H1 (cell line): ENCODE measurements at regions of chr19 and their contacts with region 1.

Region 1: DNA sequence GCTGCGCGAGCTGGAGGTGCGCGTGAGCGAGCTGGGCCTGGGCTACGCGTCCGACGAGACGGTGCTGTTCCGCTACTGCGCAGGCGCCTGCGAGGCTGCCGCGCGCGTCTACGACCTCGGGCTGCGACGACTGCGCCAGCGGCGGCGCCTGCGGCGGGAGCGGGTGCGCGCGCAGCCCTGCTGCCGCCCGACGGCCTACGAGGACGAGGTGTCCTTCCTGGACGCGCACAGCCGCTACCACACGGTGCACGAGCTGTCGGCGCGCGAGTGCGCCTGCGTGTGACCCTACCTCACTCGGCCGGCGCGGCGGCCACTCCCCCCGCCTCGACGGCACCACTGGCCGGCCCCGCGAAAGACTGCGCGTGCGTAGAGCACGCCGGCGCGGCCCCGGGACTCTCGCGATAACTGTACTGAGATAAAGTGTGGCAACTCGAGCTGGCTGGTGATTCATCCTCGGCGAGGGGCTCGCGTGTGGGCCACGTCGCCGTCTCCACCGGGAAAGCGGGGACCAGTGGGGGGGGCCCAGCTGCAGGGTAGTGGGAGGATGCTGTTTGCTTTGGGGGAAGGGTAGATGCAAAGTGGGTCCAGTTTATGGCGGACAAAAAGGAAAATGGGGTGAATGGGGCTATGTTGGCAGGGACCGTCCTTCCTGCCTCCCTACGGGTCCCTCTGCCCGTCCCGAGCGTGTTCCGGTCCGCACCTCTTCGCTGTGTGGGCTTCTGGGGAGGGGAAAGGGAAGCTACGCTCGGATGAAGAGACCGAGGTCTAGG is 11.4 kb downstream of the FUT6 start:
- DNase-seq: peak; percentile 84 to 97
- H3K4me3 ChIP-seq: peak overlapping the region; percentile 72 to 89 (median 76)
- H3K27ac ChIP-seq: peak overlapping the region; percentile 88
- H3K4me1 ChIP-seq: peaks cover 0 to 8% (median 6%) of the 10 kb centered on the region in 4 experiments; a peak in 6 of 7 replicates
- H3K27me3 ChIP-seq: no peaks in the 10 kb centered on the region; a peak in 1 of 7 replicates
- CTCF ChIP-seq: no peak
- EP300 ChIP-seq: no peak
- POLR2A ChIP-seq: peak in 1 of 2 experiments; percentile 97; a peak in 2 of 3 replicates
- RAD21 ChIP-seq: no peak

Region 2: DNA sequence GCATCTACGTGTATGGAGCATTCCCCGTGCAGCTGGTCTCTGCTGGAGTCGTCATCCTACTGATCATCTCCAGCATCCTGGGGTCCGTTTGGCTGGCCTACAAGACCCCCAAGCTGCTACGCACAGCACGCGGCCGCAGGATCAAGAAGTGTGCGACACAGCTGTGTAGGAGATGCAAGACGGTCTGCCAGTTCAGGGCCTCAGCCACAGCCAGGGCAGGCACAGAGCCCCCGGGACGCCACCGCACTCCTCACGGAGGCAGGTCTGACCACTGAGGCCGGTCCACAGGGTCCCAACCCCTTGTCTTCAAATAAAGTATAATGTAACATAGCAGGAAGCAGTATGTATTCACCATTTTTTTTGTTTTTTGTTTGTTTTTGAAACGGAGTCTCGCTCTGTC is 49.7 kb before region 1 on chr19:
- CTCF ChIA-PET with region 1: no interaction called
- POLR2A ChIA-PET with region 1: no interaction called
- DNase-seq: no peak
- H3K4me3 ChIP-seq: no peak overlapping the region
- H3K27ac ChIP-seq: no peak overlapping the region
- H3K4me1 ChIP-seq: no peaks in the 10 kb centered on the region
- H3K27me3 ChIP-seq: no peaks in the 10 kb centered on the region; a peak in 2 of 7 replicates
- CTCF ChIP-seq: no peak
- EP300 ChIP-seq: no peak
- POLR2A ChIP-seq: no peak
- RAD21 ChIP-seq: no peak

Region 3: DNA sequence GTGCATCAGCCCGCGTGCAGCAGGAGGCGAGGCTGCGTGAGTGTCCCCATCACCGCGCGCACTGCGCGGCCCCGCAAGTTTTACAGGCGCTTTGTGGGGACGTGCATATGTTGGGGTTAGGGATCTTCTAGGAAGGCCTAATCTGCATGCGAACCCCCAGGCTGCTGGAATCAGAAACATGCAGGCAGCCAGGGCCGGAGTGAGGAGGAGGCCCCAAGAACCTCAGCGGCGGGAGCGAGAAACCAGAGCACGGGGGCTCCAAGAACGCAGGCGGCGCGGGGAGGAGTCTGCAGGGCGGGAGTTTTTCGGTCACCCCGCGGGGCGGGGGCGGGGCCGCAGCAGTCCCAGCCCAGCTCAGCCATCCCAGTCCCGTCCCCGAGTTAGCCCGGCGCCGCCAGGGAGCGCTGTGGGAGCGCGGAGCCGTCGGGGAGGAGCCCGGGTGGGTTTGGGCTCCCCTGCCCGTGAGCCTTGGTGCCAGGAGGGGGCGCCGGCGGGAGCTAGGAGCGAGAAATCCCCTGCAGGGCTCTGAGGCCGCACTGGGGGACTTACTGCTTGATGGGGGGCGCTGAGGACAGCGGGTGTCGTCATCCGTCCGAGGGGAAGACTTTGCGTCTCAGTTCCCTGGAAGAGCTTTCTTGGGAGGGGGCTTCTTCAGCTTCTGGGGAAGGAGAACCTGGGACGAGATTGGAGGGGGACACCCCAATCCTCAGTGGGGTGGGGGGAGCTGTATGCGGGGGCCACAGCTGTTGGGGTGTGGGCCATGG is 24.1 kb before region 1 on chr19:
- CTCF ChIA-PET with region 1: interaction called, 58 read pairs
- POLR2A ChIA-PET with region 1: interaction called, 25 read pairs
- DNase-seq: peak; percentile 88 to 100
- H3K4me3 ChIP-seq: peak overlapping the region; percentile 2 to 57 (median 15); a peak in 6 of 8 replicates
- H3K27ac ChIP-seq: no peak overlapping the region
- H3K4me1 ChIP-seq: peaks cover 0 to 18% (median 10%) of the 10 kb centered on the region in 4 experiments; a peak in 5 of 7 replicates
- H3K27me3 ChIP-seq: peaks cover 2 to 16% (median 8%) of the 10 kb centered on the region in 4 experiments; a peak in 6 of 7 replicates
- CTCF ChIP-seq: peak; percentile 93 to 99 (median 94)
- EP300 ChIP-seq: 0 out of 3 replicates have a peak, but pooled peaks of 1 of the 2 experiments have one; percentile 8
- POLR2A ChIP-seq: no peak
- RAD21 ChIP-seq: peak; percentile 88 to 93

Region 4: DNA sequence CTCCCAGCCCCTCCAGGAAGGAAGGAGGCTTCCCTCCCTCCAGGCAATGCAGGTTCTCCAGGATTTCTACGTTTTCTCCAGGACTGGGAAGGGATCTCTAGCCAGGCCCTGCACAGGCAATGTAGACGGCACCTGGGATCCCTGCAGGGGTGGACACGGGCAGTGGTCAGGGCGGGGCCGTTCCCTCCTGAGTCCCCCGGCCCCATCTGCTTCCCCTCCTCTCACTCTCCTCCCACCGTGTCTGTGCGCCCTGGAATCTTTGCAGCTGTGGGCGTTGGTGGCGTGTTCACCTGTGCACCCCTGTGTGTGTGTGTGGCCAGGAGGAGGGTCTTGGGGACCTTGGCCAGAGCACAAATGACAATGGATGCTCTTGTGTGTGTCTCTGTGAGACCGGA is 13.2 kb before region 1 on chr19:
- CTCF ChIA-PET with region 1: interaction called, 32 read pairs
- POLR2A ChIA-PET with region 1: interaction called, 12 read pairs
- DNase-seq: no peak
- H3K4me3 ChIP-seq: no peak overlapping the region
- H3K27ac ChIP-seq: no peak overlapping the region
- H3K4me1 ChIP-seq: no peaks in the 10 kb centered on the region
- H3K27me3 ChIP-seq: no peaks in the 10 kb centered on the region
- CTCF ChIP-seq: no peak
- EP300 ChIP-seq: no peak
- POLR2A ChIP-seq: no peak
- RAD21 ChIP-seq: no peak

Region 5: GRCh38 chr19:5839065-5840017 is 11.3 kb after region 1 on chr19 and contains the start of gene FUT6:
- CTCF ChIA-PET with region 1: interaction called, 4 read pairs
- POLR2A ChIA-PET with region 1: interaction called, 16 read pairs
- DNase-seq: no peak
- H3K4me3 ChIP-seq: no peak within 1 kb of the TSS
- H3K27ac ChIP-seq: no peak within 1 kb of the TSS
- H3K4me1 ChIP-seq: no peaks in the 10 kb centered on the region; a peak in 1 of 7 replicates
- H3K27me3 ChIP-seq: peaks cover 0 to 3% (median 0%) of the 10 kb centered on the region in 4 experiments; a peak in 3 of 7 replicates
- CTCF ChIP-seq: no peak
- EP300 ChIP-seq: no peak
- POLR2A ChIP-seq: no peak
- RAD21 ChIP-seq: no peak
- total RNA-seq, gene FUT6: not detected in 2 replicates

Region 6: DNA sequence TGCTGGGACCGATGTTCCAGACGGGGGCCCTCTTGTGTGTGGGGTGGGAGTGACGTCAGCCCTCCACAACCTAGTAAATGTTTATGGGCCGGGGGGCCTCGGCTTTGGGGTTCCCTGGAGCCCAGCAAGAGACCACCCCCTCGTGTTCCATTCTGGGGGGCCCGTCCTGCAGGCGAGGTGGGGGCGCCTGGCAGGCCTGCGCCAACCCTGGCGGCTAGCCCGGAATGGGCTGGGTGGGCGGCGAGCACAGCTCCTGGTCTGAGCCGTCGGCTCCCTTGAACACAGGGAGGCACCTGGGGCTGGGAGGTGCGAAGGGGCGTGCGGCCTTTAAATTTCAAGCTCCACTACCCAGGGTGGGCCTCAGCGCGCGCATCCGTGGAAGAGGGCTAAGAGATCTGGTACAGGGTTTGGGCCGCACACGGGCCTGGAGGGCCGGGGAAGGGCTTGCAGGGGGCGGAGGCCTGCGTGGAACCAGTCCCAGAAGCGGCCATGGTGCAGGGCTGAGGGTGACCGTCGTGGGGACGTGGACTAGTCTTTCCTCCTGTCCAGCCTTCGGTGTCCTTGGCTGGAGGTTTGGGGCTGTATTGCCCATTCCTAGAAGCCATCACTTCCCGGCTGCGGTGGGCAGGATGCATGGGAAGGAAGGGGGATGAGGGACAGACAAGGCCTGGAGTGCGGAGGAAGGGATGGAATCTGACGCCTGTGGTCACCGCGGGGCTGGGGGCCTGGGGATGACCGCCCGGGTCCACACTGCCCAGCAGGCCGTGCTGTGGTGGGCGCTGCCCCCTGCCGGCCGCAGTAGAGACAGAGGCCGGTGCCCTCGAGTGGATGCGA is 64.1 kb after region 1 on chr19:
- CTCF ChIA-PET with region 1: interaction called, 9 read pairs
- POLR2A ChIA-PET with region 1: interaction called, 43 read pairs
- DNase-seq: peak in 1 of 2 experiments; percentile 70
- H3K4me3 ChIP-seq: no peak overlapping the region
- H3K27ac ChIP-seq: no peak overlapping the region
- H3K4me1 ChIP-seq: peaks cover 0 to 11% (median 4%) of the 10 kb centered on the region in 4 experiments; a peak in 5 of 7 replicates
- H3K27me3 ChIP-seq: peaks cover 0 to 1% (median 0%) of the 10 kb centered on the region in 4 experiments; a peak in 3 of 7 replicates
- CTCF ChIP-seq: peak; percentile 72 to 80 (median 75)
- EP300 ChIP-seq: no peak
- POLR2A ChIP-seq: peak in 1 of 2 experiments; percentile 56; a peak in 1 of 3 replicates
- RAD21 ChIP-seq: peak; percentile 78 to 79

Region 7: GRCh38 chr19:5897189-5897969 is 69.3 kb after region 1 on chr19:
- CTCF ChIA-PET with region 1: interaction called, 12 read pairs
- POLR2A ChIA-PET with region 1: interaction called, 43 read pairs
- DNase-seq: peak in 1 of 2 experiments; percentile 66
- H3K4me3 ChIP-seq: no peak overlapping the region
- H3K27ac ChIP-seq: no peak overlapping the region; the same call in 1 of the 2 replicates
- H3K4me1 ChIP-seq: peaks cover 0 to 2% (median under 1%) of the 10 kb centered on the region in 4 experiments; a peak in 4 of 7 replicates
- H3K27me3 ChIP-seq: peaks cover 0 to 1% (median 0%) of the 10 kb centered on the region in 4 experiments; a peak in 2 of 7 replicates
- CTCF ChIP-seq: peak; percentile 53 to 62 (median 62)
- EP300 ChIP-seq: no peak
- POLR2A ChIP-seq: no peak
- RAD21 ChIP-seq: peak; percentile 43 to 57

Region 8: GRCh38 chr19:5904352-5905113 is 76.5 kb after region 1 on chr19 and contains the start of gene VMAC:
- CTCF ChIA-PET with region 1: interaction called, 12 read pairs
- POLR2A ChIA-PET with region 1: interaction called, 25 read pairs
- DNase-seq: peak; percentile 99 to 100
- H3K4me3 ChIP-seq: peak within 1 kb of the TSS; percentile 80 to 99 (median 95)
- H3K27ac ChIP-seq: peak within 1 kb of the TSS; percentile 87
- H3K4me1 ChIP-seq: peaks cover 0 to 5% (median 0%) of the 10 kb centered on the region in 4 experiments; a peak in 4 of 7 replicates
- H3K27me3 ChIP-seq: no peaks in the 10 kb centered on the region
- CTCF ChIP-seq: peak in 1 of 3 experiments; percentile 9; a peak in 1 of 4 replicates
- EP300 ChIP-seq: no peak
- POLR2A ChIP-seq: peak in 1 of 2 experiments; percentile 70; a peak in 2 of 3 replicates
- RAD21 ChIP-seq: no peak
- total RNA-seq, gene VMAC: 1.2 and 1.3 TPM in 2 replicates